ENCODE measurements at regions of chr10 and their contacts with region 1.

Region 1: DNA sequence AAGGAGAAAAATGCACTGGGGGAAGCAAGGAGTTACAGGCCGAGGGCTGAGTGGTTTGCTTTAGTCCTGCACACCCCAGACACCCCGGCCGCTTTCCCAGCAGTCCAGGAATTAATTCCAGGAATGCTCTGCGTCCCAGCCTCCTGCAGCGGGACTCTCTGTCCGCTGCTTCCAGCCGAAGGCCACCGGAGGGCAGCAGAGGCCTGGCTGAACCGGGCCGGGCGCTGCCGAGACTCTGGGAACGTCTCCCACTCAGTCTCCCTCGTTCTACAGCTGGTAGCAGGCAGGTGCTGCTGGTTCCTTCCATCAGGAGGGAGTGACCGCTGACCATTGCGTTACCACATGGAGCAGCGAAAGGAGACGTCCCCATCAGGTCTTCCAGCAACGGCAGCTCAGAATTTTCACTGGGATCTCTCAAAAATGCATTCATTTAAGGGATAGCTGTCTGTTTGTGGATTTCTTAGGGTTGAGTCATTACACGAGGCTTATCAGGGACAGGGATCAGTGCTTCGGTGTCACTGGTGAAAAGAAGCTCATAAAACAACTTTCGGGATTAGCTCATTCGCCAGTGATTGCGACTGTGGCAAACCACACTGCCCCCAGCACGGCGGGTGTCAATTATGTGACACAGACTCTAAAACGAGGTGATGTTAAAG is 24.9 kb upstream of the PITRM1 start:
- DNase-seq: peak; percentile 84
- H3K4me3 Mint-ChIP-seq: no peak overlapping the region
- H3K27ac Mint-ChIP-seq: no peak overlapping the region
- H3K4me1 Mint-ChIP-seq: peaks cover 10% of the 10 kb centered on the region
- H3K27me3 Mint-ChIP-seq: peaks cover 41% of the 10 kb centered on the region

Region 2: GRCh38 chr10:3226960-3227744 is 29.7 kb after region 1 on chr10:
- CTCF ChIA-PET with region 1: interaction called, 4 read pairs
- intact Hi-C with region 1: loop called (anchors 1 kb)
- DNase-seq: no peak
- H3K4me3 Mint-ChIP-seq: no peak overlapping the region
- H3K27ac Mint-ChIP-seq: no peak overlapping the region
- H3K4me1 Mint-ChIP-seq: peaks cover 22% of the 10 kb centered on the region
- H3K27me3 Mint-ChIP-seq: peaks cover 2% of the 10 kb centered on the region

Region 3: GRCh38 chr10:4214908-4215307 is 1017.4 kb after region 1 on chr10:
- CTCF ChIA-PET with region 1: no interaction called
- intact Hi-C with region 1: no loop called
- DNase-seq: no peak
- H3K4me3 Mint-ChIP-seq: no peak overlapping the region
- H3K27ac Mint-ChIP-seq: no peak overlapping the region
- H3K4me1 Mint-ChIP-seq: peaks cover 15% of the 10 kb centered on the region
- H3K27me3 Mint-ChIP-seq: peaks cover 4% of the 10 kb centered on the region

Measured in activated naive CD4-positive, alpha-beta T cell treated with anti-CD3 and anti-CD28 coated beads for 36 hours (primary cell).